Naive thymus-derived CD4-positive, alpha-beta T cell (primary cell): ENCODE measurements at regions of chr4 and their contacts with region 1.

Region 1: GRCh38 chr4:80631861-80632260 is 296.3 kb downstream of the CFAP299 start:
- DNase-seq: no peak
- ATAC-seq: no peak
- H3K4me3 ChIP-seq: no peak overlapping the region
- H3K4me3 Mint-ChIP-seq: no peak overlapping the region
- H3K27ac ChIP-seq: no peak overlapping the region
- H3K27ac Mint-ChIP-seq: no peak overlapping the region
- H3K4me1 ChIP-seq: no peaks in the 10 kb centered on the region
- H3K4me1 Mint-ChIP-seq: no peaks in the 10 kb centered on the region
- H3K27me3 ChIP-seq: no peaks in the 10 kb centered on the region
- H3K27me3 Mint-ChIP-seq: no peaks in the 10 kb centered on the region

Region 2: GRCh38 chr4:80610845-80611677 is 20.8 kb before region 1 on chr4:
- CTCF ChIA-PET with region 1: no interaction called
- POLR2A ChIA-PET with region 1: interaction called, 3 read pairs
- intact Hi-C with region 1: loop called in 1 of 2 experiments (anchors 2 kb)
- DNase-seq: no peak
- ATAC-seq: no peak
- H3K4me3 ChIP-seq: no peak overlapping the region
- H3K4me3 Mint-ChIP-seq: no peak overlapping the region
- H3K27ac ChIP-seq: no peak overlapping the region
- H3K27ac Mint-ChIP-seq: no peak overlapping the region
- H3K4me1 ChIP-seq: no peaks in the 10 kb centered on the region
- H3K4me1 Mint-ChIP-seq: peaks cover 0 to 27% (median 14%) of the 10 kb centered on the region in 7 donors
- H3K27me3 ChIP-seq: no peaks in the 10 kb centered on the region
- H3K27me3 Mint-ChIP-seq: peaks cover 0 to 5% (median 0%) of the 10 kb centered on the region in 5 donors